Activated naive CD8-positive, alpha-beta T cell treated with anti-CD3 and anti-CD28 coated beads, Interleukin-2, amount 10 ng/mL, durations not matched to agents 7 days and 5 days (primary cell): ENCODE measurements at regions of chr3 and their contacts with region 1.

Region 1: DNA sequence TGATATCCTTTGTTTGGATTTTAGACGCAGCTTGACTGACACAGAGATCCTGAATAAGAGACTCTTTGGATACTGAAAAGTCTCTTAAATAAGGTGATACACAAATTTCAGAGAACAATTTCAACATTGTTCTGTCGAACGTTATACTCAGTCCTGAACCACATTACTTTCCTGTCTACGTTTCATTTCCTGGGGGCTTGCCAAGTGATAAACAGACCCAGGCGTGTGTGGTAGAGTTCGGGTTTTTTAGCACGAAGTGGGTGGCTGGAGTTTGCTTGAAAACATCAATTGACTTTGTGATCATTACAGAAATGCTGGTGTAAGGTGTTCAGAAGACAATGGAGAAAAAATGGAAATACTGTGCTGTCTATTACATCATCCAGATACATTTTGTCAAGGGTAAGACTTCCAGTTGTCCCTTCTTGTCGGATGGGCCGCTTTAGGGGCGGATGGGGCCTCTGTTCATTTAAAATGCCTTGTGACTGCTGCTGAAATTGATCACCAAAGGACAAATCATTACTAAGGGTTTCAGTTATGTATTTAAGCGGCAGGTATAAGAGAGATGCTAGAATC is at the start of gene CD96:
- DNase-seq: peak; percentile 45
- ATAC-seq: peak; percentile 71
- H3K4me3 Mint-ChIP-seq: peak within 1 kb of the TSS; percentile 96
- H3K27ac Mint-ChIP-seq: peak within 1 kb of the TSS; percentile 94
- H3K4me1 Mint-ChIP-seq: peaks cover 46% of the 10 kb centered on the region
- H3K27me3 Mint-ChIP-seq: no peaks in the 10 kb centered on the region
- total RNA-seq, gene CD96: 375 to 379 TPM

Region 2: GRCh38 chr3:111616417-111617105 is 74.6 kb after region 1 on chr3:
- POLR2A ChIA-PET with region 1: interaction called, 49 read pairs
- DNase-seq: peak; percentile 67
- ATAC-seq: peak; percentile 92
- H3K4me3 Mint-ChIP-seq: peak overlapping the region; percentile 18
- H3K27ac Mint-ChIP-seq: peak overlapping the region; percentile 91
- H3K4me1 Mint-ChIP-seq: peaks cover 55% of the 10 kb centered on the region
- H3K27me3 Mint-ChIP-seq: no peaks in the 10 kb centered on the region